Activated naive CD4-positive, alpha-beta T cell treated with anti-CD3 and anti-CD28 coated beads for 36 hours (primary cell): ENCODE measurements at regions of chr15 and their contacts with region 1.

Region 1: GRCh38 chr15:78108299-78109084 is 16.1 kb downstream of the SH2D7 start:
- DNase-seq: peak; percentile 89
- H3K4me3 Mint-ChIP-seq: no peak overlapping the region
- H3K27ac Mint-ChIP-seq: no peak overlapping the region
- H3K4me1 Mint-ChIP-seq: peaks cover 21% of the 10 kb centered on the region
- H3K27me3 Mint-ChIP-seq: no peaks in the 10 kb centered on the region

Region 2: DNA sequence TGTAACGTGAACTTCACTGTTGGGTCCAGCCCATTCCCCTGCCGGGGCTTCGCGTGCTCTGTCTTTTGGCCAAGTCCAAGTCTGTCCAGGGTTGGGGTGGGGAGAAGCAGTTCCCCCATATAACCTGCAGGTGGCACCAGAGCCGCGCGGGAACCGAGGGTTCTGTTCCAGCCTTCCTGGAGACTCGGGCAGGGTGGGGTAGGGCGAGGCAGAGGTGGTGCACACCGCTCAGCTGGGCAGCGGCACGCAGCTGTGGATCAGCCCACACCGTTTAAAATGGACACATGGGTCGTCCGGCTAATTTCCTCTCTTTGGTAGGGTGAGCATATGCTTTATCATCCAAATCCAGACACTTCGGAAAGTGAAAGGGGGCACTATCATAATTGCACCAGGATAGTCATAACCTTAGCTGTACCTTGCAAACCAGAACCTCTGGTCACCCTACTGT is 149.0 kb before region 1 on chr15:
- CTCF ChIA-PET with region 1: interaction called, 78 read pairs
- intact Hi-C with region 1: loop called (anchors 1 kb)
- DNase-seq: peak; percentile 85
- H3K4me3 Mint-ChIP-seq: peak overlapping the region; percentile 17
- H3K27ac Mint-ChIP-seq: no peak overlapping the region
- H3K4me1 Mint-ChIP-seq: peaks cover under 1% of the 10 kb centered on the region
- H3K27me3 Mint-ChIP-seq: peaks cover 3% of the 10 kb centered on the region

Region 3: DNA sequence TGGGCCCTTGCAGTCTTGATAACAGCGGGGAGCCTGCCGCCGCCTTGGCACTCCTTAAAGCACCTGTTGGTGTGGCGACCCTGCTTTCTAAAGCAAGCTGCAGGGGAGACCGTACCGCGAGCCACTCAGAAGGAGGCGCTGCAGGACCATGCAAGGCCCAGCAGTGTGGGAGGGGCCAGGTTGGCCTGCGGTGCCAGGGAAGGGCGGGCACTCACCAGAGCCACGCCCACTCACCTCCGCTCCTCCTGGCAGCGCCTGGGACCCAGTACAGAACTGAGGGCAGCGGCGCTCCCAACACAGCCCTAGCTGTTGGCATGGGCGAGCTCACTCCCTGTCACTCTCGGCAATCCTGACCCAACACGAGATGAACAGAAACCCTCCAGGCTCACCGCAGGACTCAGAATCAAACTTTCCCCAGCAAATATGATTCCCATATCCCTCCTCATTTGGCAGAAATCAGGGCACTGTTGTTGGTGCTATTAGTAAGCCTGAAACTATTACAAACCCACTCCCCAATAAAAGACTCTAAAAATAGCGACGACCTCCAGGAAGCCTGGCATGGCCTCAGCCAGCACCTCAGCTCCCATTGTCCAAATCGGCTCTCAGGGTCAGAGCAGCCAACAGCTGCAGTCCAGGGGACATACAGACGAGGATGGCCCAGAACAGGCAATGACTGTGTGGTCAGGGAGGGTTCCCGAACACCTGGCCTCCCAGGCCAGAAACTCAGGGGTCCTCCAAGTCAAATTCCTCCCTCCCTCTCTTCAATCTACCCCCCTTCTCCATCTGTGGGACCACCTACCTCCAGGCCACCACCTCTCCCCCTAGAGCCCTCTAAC is 108.2 kb before region 1 on chr15:
- CTCF ChIA-PET with region 1: interaction called, 49 read pairs
- intact Hi-C with region 1: loop called (anchors 1 kb)
- DNase-seq: peak; percentile 85
- H3K4me3 Mint-ChIP-seq: no peak overlapping the region
- H3K27ac Mint-ChIP-seq: no peak overlapping the region
- H3K4me1 Mint-ChIP-seq: peaks cover 2% of the 10 kb centered on the region
- H3K27me3 Mint-ChIP-seq: no peaks in the 10 kb centered on the region

Region 4: GRCh38 chr15:78049691-78050440 is 58.6 kb before region 1 on chr15:
- CTCF ChIA-PET with region 1: interaction called, 11 read pairs
- intact Hi-C with region 1: no loop called
- DNase-seq: peak; percentile 83
- H3K4me3 Mint-ChIP-seq: peak overlapping the region; percentile 16
- H3K27ac Mint-ChIP-seq: peak overlapping the region; percentile 80
- H3K4me1 Mint-ChIP-seq: peaks cover 78% of the 10 kb centered on the region
- H3K27me3 Mint-ChIP-seq: no peaks in the 10 kb centered on the region

Region 5: DNA sequence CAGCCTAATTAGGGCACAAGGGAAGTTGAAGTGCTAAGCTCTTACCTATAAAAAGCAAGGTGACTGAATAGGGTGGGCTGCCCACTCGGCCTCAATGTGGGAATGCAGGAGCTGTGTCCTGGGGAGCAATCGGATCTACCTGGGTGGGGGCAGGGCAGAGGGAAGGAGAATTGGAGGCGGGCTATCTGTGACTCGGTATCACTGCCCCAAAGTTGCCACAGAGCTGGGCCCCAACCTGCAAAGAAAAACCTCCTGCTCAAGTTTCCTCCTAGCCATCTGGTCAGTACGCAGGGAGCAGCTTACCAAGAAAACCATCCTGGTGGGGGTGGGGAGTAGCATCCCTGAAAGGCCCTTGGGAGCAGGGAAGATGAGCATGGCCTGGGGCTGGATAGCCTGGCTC is 12.0 kb after region 1 on chr15:
- CTCF ChIA-PET with region 1: interaction called, 12 read pairs
- intact Hi-C with region 1: no loop called
- DNase-seq: no peak
- H3K4me3 Mint-ChIP-seq: no peak overlapping the region
- H3K27ac Mint-ChIP-seq: no peak overlapping the region
- H3K4me1 Mint-ChIP-seq: no peaks in the 10 kb centered on the region
- H3K27me3 Mint-ChIP-seq: no peaks in the 10 kb centered on the region